RWPE1 (cell line): ENCODE measurements at regions of chr5 and their contacts with region 1.

Region 1: DNA sequence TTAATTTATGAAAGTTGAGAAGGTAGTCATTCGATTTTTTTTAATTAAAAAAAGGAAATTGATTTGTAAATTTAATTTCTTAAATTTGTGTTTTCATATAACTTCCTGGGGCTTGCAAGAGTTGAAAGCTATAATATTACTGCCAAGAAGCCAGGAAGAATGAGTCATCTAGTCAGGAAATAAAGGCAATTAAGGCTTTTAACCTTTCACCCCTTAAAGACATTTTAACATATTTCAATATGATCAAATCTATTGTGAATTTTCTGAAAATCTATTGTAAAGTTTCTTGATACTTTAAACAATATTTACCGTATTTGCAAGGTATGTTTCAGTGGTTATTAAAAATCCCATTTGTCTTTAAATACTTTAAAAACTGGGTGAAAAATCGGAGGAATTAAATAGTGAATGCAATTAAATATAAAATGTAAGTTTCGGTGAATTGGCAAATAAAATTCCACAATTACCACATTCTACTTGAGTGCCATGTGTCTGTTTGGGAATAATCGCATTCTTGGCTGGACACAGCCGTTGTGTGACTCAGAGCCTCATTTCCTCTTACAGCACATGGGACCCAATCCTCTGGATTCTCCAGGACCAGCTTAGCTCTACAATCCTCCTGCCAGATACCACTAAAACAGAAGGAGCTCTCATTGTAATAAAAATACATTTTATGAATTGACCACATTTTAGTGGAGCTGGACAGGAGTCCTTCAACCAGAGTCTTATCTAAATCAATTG is 310.7 kb downstream of the HCN1 start:
- DNase-seq: peak; percentile 77
- H3K27ac ChIP-seq: peak overlapping the region; percentile 91
- CTCF ChIP-seq: no peak

Region 2: GRCh38 chr5:44051591-44051990 is 1333.9 kb before region 1 on chr5:
- CTCF ChIA-PET with region 1: interaction called, 10 read pairs
- POLR2A ChIA-PET with region 1: no interaction called
- DNase-seq: no peak
- H3K27ac ChIP-seq: no peak overlapping the region
- CTCF ChIP-seq: no peak